Ascending aorta (tissue), 2 donors: ENCODE measurements at regions of chr12 and their contacts with region 1.

Region 1: GRCh38 chr12:116319898-116320621 is 42.6 kb upstream of the MED13L start:
- DNase-seq: peak; percentile 53 to 95
- H3K4me3 ChIP-seq: peak overlapping the region; percentile 17 to 24
- H3K27ac ChIP-seq: peak overlapping the region; percentile 87 to 89
- H3K4me1 ChIP-seq: peaks cover 11 to 25% of the 10 kb centered on the region in 2 donors
- H3K27me3 ChIP-seq: no peaks in the 10 kb centered on the region
- CTCF ChIP-seq: no peak

Region 2: GRCh38 chr12:116284396-116284795 is 35.7 kb before region 1 on chr12:
- intact Hi-C with region 1: no loop called
- DNase-seq: no peak
- H3K4me3 ChIP-seq: no peak overlapping the region
- H3K27ac ChIP-seq: no peak overlapping the region
- H3K4me1 ChIP-seq: peaks cover 0 to 7% of the 10 kb centered on the region in 2 donors
- H3K27me3 ChIP-seq: no peaks in the 10 kb centered on the region
- CTCF ChIP-seq: no peak

Region 3: GRCh38 chr12:116358893-116359761 is 39.1 kb after region 1 on chr12:
- intact Hi-C with region 1: loop called (anchors 2 kb)
- DNase-seq: peak; percentile 66 to 97
- H3K4me3 ChIP-seq: peak overlapping the region in 1 of 2 donors; percentile 5
- H3K27ac ChIP-seq: peak overlapping the region; percentile 68 to 85
- H3K4me1 ChIP-seq: peaks cover 0 to 13% of the 10 kb centered on the region in 2 donors
- H3K27me3 ChIP-seq: no peaks in the 10 kb centered on the region
- CTCF ChIP-seq: no peak

Region 4: GRCh38 chr12:116369921-116370404 is 49.9 kb after region 1 on chr12:
- intact Hi-C with region 1: loop called (anchors 2 kb)
- DNase-seq: no peak
- H3K4me3 ChIP-seq: no peak overlapping the region
- H3K27ac ChIP-seq: peak overlapping the region in 1 of 2 donors; percentile 17
- H3K4me1 ChIP-seq: peaks cover 4 to 22% of the 10 kb centered on the region in 2 donors
- H3K27me3 ChIP-seq: no peaks in the 10 kb centered on the region
- CTCF ChIP-seq: no peak

Region 5: GRCh38 chr12:116434155-116435011 is 114.3 kb after region 1 on chr12:
- intact Hi-C with region 1: loop called (anchors 2 kb)
- DNase-seq: peak; percentile 83 to 97
- H3K4me3 ChIP-seq: peak overlapping the region; percentile 24 to 56
- H3K27ac ChIP-seq: peak overlapping the region; percentile 67 to 74
- H3K4me1 ChIP-seq: peaks cover 4 to 12% of the 10 kb centered on the region in 2 donors
- H3K27me3 ChIP-seq: no peaks in the 10 kb centered on the region
- CTCF ChIP-seq: no peak

Region 6: GRCh38 chr12:116525418-116526001 is 205.4 kb after region 1 on chr12:
- intact Hi-C with region 1: loop called (anchors 2 kb)
- DNase-seq: peak; percentile 54 to 92
- H3K4me3 ChIP-seq: peak overlapping the region; percentile 31 to 58
- H3K27ac ChIP-seq: peak overlapping the region; percentile 82 to 83
- H3K4me1 ChIP-seq: peaks cover 2 to 28% of the 10 kb centered on the region in 2 donors
- H3K27me3 ChIP-seq: no peaks in the 10 kb centered on the region
- CTCF ChIP-seq: no peak